ENCODE measurements at regions of chr13 and their contacts with region 1.

Region 1: GRCh38 chr13:111066544-111066943 is 48.6 kb upstream of the ARHGEF7 start:
- DNase-seq: no peak
- ATAC-seq: no peak
- H3K4me3 Mint-ChIP-seq: peak overlapping the region; percentile 34
- H3K27ac Mint-ChIP-seq: no peak overlapping the region
- H3K4me1 Mint-ChIP-seq: peaks cover 4% of the 10 kb centered on the region
- H3K27me3 Mint-ChIP-seq: peaks cover 44% of the 10 kb centered on the region

Region 2: DNA sequence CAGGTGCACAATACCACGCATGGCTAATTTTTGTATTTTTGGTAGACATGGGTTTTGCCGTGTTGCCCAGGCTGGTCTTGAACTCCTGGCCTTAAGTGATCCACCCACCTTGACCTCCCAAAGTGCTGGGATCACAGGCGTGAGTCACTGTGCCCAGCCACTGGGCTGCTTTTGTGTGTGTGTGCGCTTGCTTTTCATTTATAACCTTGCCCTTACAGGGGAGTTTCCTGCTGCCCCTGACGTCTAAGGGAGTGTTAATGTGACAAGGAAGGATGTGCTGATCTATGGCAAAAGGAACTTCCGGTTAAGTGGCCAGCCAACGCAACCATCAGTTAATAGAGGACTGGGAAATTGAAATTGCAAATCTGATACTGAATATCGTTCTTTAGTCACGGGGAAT is 295.4 kb before region 1 on chr13:
- CTCF ChIA-PET with region 1: no interaction called
- POLR2A ChIA-PET with region 1: no interaction called
- intact Hi-C with region 1: no loop called
- DNase-seq: no peak
- ATAC-seq: no peak
- H3K4me3 Mint-ChIP-seq: no peak overlapping the region
- H3K27ac Mint-ChIP-seq: no peak overlapping the region
- H3K4me1 Mint-ChIP-seq: no peaks in the 10 kb centered on the region
- H3K27me3 Mint-ChIP-seq: peaks cover 6% of the 10 kb centered on the region

Region 3: DNA sequence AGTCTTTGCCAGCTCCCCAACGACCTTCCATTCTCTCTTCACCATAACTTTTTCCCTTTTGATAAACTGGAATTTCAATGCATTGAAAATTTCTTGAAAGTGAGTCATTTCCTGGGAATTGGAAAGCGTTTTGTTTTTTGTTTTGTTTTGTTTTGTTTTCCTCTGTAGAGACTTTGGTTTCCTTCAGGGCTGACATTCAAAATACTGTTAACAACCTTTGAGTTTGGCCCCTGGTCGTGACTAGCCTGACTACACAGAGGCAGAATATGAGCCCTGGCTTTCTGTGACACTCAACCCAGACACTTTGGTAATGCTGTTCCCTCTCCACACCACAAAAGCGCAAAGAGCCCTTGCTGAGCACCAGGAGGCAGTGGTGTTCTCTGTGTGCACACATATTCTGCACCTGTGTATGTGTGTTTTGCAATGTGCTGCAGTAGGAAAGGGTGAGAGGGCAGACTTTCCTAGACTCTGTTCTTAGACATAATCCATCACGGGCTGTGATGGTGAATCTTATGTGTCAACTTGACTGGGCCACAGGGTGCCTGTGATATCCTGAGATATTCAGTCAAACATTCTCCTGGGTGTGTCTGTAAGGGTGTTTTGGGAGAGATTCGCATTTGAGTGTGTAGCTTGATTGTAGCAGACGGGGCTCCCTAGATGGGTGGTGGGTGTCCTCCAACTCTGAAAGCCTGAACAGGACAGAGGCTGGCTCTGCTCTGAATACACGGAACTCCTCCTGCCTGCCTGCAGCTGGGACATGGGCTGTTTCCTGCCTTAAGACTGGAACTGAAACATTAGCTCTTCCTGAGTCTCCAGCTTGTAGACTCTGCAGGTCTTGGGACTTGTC is 122.2 kb before region 1 on chr13:
- CTCF ChIA-PET with region 1: interaction called, 10 read pairs
- POLR2A ChIA-PET with region 1: no interaction called
- intact Hi-C with region 1: no loop called
- DNase-seq: peak; percentile 65
- ATAC-seq: peak; percentile 84
- H3K4me3 Mint-ChIP-seq: no peak overlapping the region
- H3K27ac Mint-ChIP-seq: no peak overlapping the region
- H3K4me1 Mint-ChIP-seq: peaks cover 33% of the 10 kb centered on the region
- H3K27me3 Mint-ChIP-seq: peaks cover 8% of the 10 kb centered on the region

Region 4: GRCh38 chr13:111080642-111081041 is 14.1 kb after region 1 on chr13:
- CTCF ChIA-PET with region 1: interaction called, 14 read pairs
- POLR2A ChIA-PET with region 1: no interaction called
- intact Hi-C with region 1: no loop called
- DNase-seq: no peak
- ATAC-seq: no peak
- H3K4me3 Mint-ChIP-seq: no peak overlapping the region
- H3K27ac Mint-ChIP-seq: no peak overlapping the region
- H3K4me1 Mint-ChIP-seq: no peaks in the 10 kb centered on the region
- H3K27me3 Mint-ChIP-seq: peaks cover 3% of the 10 kb centered on the region

Region 5: DNA sequence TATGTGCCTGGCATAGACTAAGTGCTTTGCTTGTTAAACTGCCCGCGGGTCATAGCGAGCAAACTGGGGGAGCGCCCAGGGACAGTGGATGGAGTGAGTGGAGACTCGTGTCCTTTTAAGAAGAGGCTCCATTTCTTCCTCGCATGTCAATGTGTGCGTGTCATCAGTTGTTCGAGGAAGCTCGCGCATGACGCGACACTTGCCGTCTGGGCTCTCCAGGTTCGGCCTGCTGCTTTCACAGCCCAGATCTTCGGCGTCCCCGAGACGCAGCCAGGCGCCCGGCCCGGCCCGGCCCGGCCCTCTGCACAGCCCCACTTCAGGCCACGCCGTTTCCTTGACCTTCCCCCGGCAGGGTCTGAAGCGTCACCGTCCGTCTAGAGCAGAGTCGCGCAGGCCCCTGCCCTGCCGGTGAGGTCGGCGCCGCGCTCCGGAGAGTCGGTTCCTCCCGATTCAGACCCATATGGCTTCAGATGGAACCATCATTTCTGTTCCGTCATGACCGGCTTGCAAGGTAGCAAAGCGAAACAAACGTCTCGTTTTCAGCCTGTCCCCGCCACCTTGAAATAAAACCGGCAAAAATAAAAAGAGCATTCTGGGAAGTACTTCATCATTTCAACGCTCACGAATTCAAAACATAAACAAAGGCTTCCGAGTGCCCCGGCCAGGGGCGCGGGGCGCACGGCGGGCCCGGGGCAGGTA is 48.0 kb after region 1 on chr13:
- CTCF ChIA-PET with region 1: interaction called, 3 read pairs
- POLR2A ChIA-PET with region 1: no interaction called
- intact Hi-C with region 1: loop called in 1 of 2 experiments (anchors 5 kb)
- DNase-seq: peak; percentile 44
- ATAC-seq: peak; percentile 66
- H3K4me3 Mint-ChIP-seq: peak overlapping the region; percentile 75
- H3K27ac Mint-ChIP-seq: no peak overlapping the region
- H3K4me1 Mint-ChIP-seq: peaks cover 12% of the 10 kb centered on the region
- H3K27me3 Mint-ChIP-seq: peaks cover 66% of the 10 kb centered on the region

Region 6: GRCh38 chr13:111216166-111216960 is 149.8 kb after region 1 on chr13:
- CTCF ChIA-PET with region 1: interaction called, 20 read pairs
- POLR2A ChIA-PET with region 1: no interaction called
- intact Hi-C with region 1: loop called in 1 of 2 experiments (anchors 2 kb)
- DNase-seq: peak; percentile 59
- ATAC-seq: peak; percentile 77
- H3K4me3 Mint-ChIP-seq: no peak overlapping the region
- H3K27ac Mint-ChIP-seq: no peak overlapping the region
- H3K4me1 Mint-ChIP-seq: peaks cover 31% of the 10 kb centered on the region
- H3K27me3 Mint-ChIP-seq: no peaks in the 10 kb centered on the region

Region 7: GRCh38 chr13:111225810-111226546 is 159.4 kb after region 1 on chr13:
- CTCF ChIA-PET with region 1: interaction called, 34 read pairs
- POLR2A ChIA-PET with region 1: no interaction called
- intact Hi-C with region 1: loop called in 1 of 2 experiments (anchors 1 kb)
- DNase-seq: peak; percentile 34
- ATAC-seq: peak; percentile 52
- H3K4me3 Mint-ChIP-seq: no peak overlapping the region
- H3K27ac Mint-ChIP-seq: no peak overlapping the region
- H3K4me1 Mint-ChIP-seq: peaks cover 28% of the 10 kb centered on the region
- H3K27me3 Mint-ChIP-seq: no peaks in the 10 kb centered on the region

Region 8: GRCh38 chr13:111449041-111449440 is 382.5 kb after region 1 on chr13:
- CTCF ChIA-PET with region 1: no interaction called
- POLR2A ChIA-PET with region 1: no interaction called
- intact Hi-C with region 1: loop called in 1 of 2 experiments (anchors 10 kb)
- DNase-seq: no peak
- ATAC-seq: no peak
- H3K4me3 Mint-ChIP-seq: no peak overlapping the region
- H3K27ac Mint-ChIP-seq: no peak overlapping the region
- H3K4me1 Mint-ChIP-seq: peaks cover 3% of the 10 kb centered on the region
- H3K27me3 Mint-ChIP-seq: peaks cover 17% of the 10 kb centered on the region